K562 (cell line): ENCODE measurements at regions of chr11 and their contacts with region 1.

Region 1: GRCh38 chr11:86068951-86069407 is at the start of gene PICALM:
- DNase-seq: peak; percentile 93 to 100 (median 95)
- ATAC-seq: peak; percentile 78
- H3K4me3 ChIP-seq: peak within 1 kb of the TSS; percentile 64
- H3K27ac ChIP-seq: peak within 1 kb of the TSS; percentile 99
- H3K4me1 ChIP-seq: peaks cover 3 to 32% of the 10 kb centered on the region in 2 experiments; a peak in 3 of 5 replicates
- H3K27me3 ChIP-seq: no peaks in the 10 kb centered on the region
- CTCF ChIP-seq: peak in 1 of 3 experiments; percentile 14; a peak in 1 of 6 replicates
- EP300 ChIP-seq: peak; percentile 62
- POLR2A ChIP-seq: no peak; the same call in 1 of the 2 replicates
- RAD21 ChIP-seq: peak in 1 of 2 experiments; percentile 20; a peak in 1 of 4 replicates
- polyA plus RNA-seq, gene PICALM: 41.3 to 129 TPM

Region 2: DNA sequence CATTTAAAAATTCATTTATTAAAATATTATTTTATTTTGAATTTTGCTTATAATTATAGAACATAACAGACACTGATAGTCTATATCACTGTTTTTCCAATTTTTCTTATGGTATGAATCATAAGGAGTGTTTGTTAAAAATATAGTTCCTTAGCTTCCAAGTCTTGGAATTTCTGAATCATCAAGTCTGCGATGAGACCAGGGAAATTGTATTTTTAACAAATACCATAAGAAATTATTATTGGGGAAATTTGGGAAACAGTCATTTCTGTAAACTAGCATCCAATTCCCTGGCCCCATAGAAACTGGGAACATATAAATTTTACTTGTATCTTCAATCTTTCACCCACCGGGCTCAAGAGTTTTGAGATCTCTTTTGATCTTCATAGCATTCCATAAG is 37.9 kb after region 1 on chr11:
- CTCF ChIA-PET with region 1: no interaction called
- POLR2A ChIA-PET with region 1: interaction called, 5 read pairs
- in situ Hi-C with region 1: no loop called
- intact Hi-C with region 1: loop called (anchors 1 kb)
- DNase-seq: no peak
- ATAC-seq: no peak
- H3K4me3 ChIP-seq: no peak overlapping the region
- H3K27ac ChIP-seq: no peak overlapping the region
- H3K4me1 ChIP-seq: peaks cover 3 to 6% of the 10 kb centered on the region in 2 experiments; a peak in 3 of 5 replicates
- H3K27me3 ChIP-seq: no peaks in the 10 kb centered on the region
- CTCF ChIP-seq: no peak
- EP300 ChIP-seq: no peak
- POLR2A ChIP-seq: no peak
- RAD21 ChIP-seq: no peak

Region 3: GRCh38 chr11:86151174-86152005 is 82.4 kb after region 1 on chr11:
- CTCF ChIA-PET with region 1: no interaction called
- POLR2A ChIA-PET with region 1: interaction called, 5 read pairs
- in situ Hi-C with region 1: no loop called
- intact Hi-C with region 1: loop called (anchors 1 kb)
- DNase-seq: peak; percentile 76 to 96 (median 86)
- ATAC-seq: peak; percentile 79
- H3K4me3 ChIP-seq: no peak overlapping the region; the same call in 1 of the 2 replicates
- H3K27ac ChIP-seq: peak overlapping the region; percentile 78
- H3K4me1 ChIP-seq: peaks cover 46 to 78% of the 10 kb centered on the region in 2 experiments
- H3K27me3 ChIP-seq: no peaks in the 10 kb centered on the region; a peak in 1 of 5 replicates
- CTCF ChIP-seq: peak in 2 of 3 experiments; percentile 7 to 24; a peak in 2 of 6 replicates
- EP300 ChIP-seq: peak; percentile 98
- POLR2A ChIP-seq: no peak
- RAD21 ChIP-seq: peak; percentile 17 to 56; a peak in 3 of 4 replicates

Region 4: DNA sequence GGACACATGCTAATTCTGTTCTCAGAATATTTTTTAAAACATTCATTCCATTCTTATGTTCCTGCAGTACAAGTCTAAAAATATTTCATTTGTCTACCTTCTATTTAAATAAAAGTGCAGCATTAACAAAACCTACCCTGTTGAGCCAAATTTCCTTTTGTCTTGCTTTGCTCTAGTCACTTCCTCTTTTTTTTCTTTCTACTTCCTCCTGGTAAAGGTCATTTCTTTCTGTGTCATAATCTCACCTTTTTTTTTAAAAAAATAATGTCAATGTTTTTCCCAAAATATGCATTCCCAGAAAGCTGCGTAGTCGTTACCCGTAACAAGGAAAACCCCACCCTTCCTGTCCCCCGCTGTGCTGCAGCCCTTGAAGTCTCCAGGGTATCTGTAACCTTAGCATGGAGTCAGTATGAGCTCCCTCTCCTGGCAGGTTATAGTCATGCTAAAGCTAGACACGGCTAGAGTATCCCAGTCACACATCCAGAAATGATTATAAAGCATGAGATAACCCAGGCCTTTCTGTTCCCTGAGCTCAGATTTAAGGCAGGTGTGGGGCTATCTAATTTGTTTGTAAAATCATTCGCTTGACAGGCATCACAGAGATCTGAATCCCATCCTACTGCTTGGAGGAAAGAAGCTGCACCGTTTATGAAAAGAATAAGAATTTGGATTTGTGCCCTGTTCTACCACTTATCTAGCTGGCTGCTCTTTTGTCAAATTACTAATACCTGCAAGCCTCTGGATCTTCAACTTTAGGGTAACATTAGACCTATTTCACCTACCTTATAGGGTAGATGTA is 124.5 kb after region 1 on chr11:
- CTCF ChIA-PET with region 1: no interaction called
- POLR2A ChIA-PET with region 1: interaction called, 13 read pairs
- in situ Hi-C with region 1: no loop called
- intact Hi-C with region 1: loop called (anchors 1 kb)
- DNase-seq: peak; percentile 88 to 97 (median 90)
- ATAC-seq: peak; percentile 94
- H3K4me3 ChIP-seq: no peak overlapping the region
- H3K27ac ChIP-seq: peak overlapping the region; percentile 87
- H3K4me1 ChIP-seq: peaks cover 14 to 59% of the 10 kb centered on the region in 2 experiments
- H3K27me3 ChIP-seq: no peaks in the 10 kb centered on the region
- CTCF ChIP-seq: peak; percentile 80 to 92 (median 89)
- EP300 ChIP-seq: peak; percentile 94
- POLR2A ChIP-seq: no peak
- RAD21 ChIP-seq: peak; percentile 90 to 95

Region 5: DNA sequence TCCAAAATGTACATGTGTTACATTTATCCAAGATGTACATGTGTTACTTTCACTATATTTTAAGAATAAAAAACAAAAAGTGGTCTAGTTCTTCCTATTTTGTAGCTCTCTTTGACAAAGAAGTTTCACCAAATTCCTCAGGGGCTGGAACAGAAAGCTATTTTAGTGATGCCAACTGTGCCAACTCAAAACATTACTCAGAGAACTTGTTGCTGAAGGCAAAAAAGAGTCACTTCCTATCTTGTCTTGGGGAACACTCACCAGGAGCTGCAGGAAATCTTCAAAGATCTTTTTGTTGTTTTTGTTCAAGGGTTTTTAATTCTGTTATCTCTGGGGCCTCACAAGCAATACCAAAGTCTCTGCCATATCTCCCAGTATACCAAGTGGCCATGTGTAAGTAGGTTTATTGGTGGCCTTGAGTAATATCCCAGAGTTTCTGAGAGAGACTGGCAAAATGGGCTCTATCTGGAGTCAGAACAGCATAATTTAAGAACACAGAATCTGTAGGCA is 162.0 kb after region 1 on chr11:
- CTCF ChIA-PET with region 1: no interaction called
- POLR2A ChIA-PET with region 1: no interaction called
- in situ Hi-C with region 1: no loop called
- intact Hi-C with region 1: no loop called
- DNase-seq: no peak
- ATAC-seq: no peak
- H3K4me3 ChIP-seq: no peak overlapping the region
- H3K27ac ChIP-seq: no peak overlapping the region
- H3K4me1 ChIP-seq: peaks cover 4 to 14% of the 10 kb centered on the region in 2 experiments
- H3K27me3 ChIP-seq: no peaks in the 10 kb centered on the region
- CTCF ChIP-seq: no peak
- EP300 ChIP-seq: no peak
- POLR2A ChIP-seq: no peak
- RAD21 ChIP-seq: no peak